ENCODE measurements at regions of chr22 and their contacts with region 1.

Region 1: GRCh38 chr22:41381329-41382097 is at the start of gene TEF:
- DNase-seq: peak; percentile 97
- ATAC-seq: peak; percentile 90
- H3K4me3 ChIP-seq: peak within 1 kb of the TSS; percentile 76 to 84 (median 80)
- H3K27ac ChIP-seq: peak within 1 kb of the TSS; percentile 98
- H3K4me1 ChIP-seq: peaks cover 24% of the 10 kb centered on the region
- H3K27me3 ChIP-seq: no peaks in the 10 kb centered on the region; a peak in 1 of 5 replicates
- CTCF ChIP-seq: no peak
- EP300 ChIP-seq: 0 out of 4 replicates have a peak, but pooled peaks of 1 of the 2 experiments have one; percentile 29
- POLR2A ChIP-seq: no peak
- RAD21 ChIP-seq: no peak
- total RNA-seq, gene TEF: 7.6 and 8.2 TPM in 2 replicates

Region 2: GRCh38 chr22:41285820-41286638 is 95.5 kb before region 1 on chr22 and contains the start of gene RANGAP1:
- CTCF ChIA-PET with region 1: no interaction called
- POLR2A ChIA-PET with region 1: interaction called, 49 read pairs
- in situ Hi-C with region 1: no loop called
- intact Hi-C with region 1: no loop called
- DNase-seq: peak; percentile 97
- ATAC-seq: peak; percentile 96
- H3K4me3 ChIP-seq: peak within 1 kb of the TSS; percentile 97 to 100 (median 98)
- H3K27ac ChIP-seq: peak within 1 kb of the TSS; percentile 88
- H3K4me1 ChIP-seq: peaks cover 58% of the 10 kb centered on the region
- H3K27me3 ChIP-seq: no peaks in the 10 kb centered on the region; a peak in 1 of 5 replicates
- CTCF ChIP-seq: peak; percentile 54
- EP300 ChIP-seq: peak; percentile 4 to 41; a peak in 1 of 4 replicates
- POLR2A ChIP-seq: peak; percentile 74 to 81
- RAD21 ChIP-seq: no peak
- total RNA-seq, gene RANGAP1: 71.7 and 83.9 TPM in 2 replicates

Region 3: GRCh38 chr22:41360126-41360525 is 21.4 kb before region 1 on chr22:
- CTCF ChIA-PET with region 1: no interaction called
- POLR2A ChIA-PET with region 1: interaction called, 135 read pairs
- in situ Hi-C with region 1: no loop called
- intact Hi-C with region 1: no loop called
- DNase-seq: peak; percentile 85
- ATAC-seq: peak; percentile 90
- H3K4me3 ChIP-seq: no peak overlapping the region; a peak in 1 of 6 replicates
- H3K27ac ChIP-seq: no peak overlapping the region
- H3K4me1 ChIP-seq: peaks cover 40% of the 10 kb centered on the region
- H3K27me3 ChIP-seq: no peaks in the 10 kb centered on the region
- CTCF ChIP-seq: 0 out of 2 replicates have a peak, but pooled peaks have one; percentile 10
- EP300 ChIP-seq: peak in 1 of 2 experiments; percentile 48; a peak in 1 of 4 replicates
- POLR2A ChIP-seq: peak in 1 of 2 experiments; percentile 35; a peak in 1 of 4 replicates
- RAD21 ChIP-seq: peak; percentile 70

Region 4: GRCh38 chr22:41403532-41404318 is 22.2 kb after region 1 on chr22:
- CTCF ChIA-PET with region 1: no interaction called
- POLR2A ChIA-PET with region 1: interaction called, 60 read pairs
- in situ Hi-C with region 1: no loop called
- intact Hi-C with region 1: no loop called
- DNase-seq: peak; percentile 76
- ATAC-seq: peak; percentile 92
- H3K4me3 ChIP-seq: peak overlapping the region in 1 of 3 experiments; percentile 56; a peak in 1 of 6 replicates
- H3K27ac ChIP-seq: no peak overlapping the region
- H3K4me1 ChIP-seq: peaks cover 47% of the 10 kb centered on the region
- H3K27me3 ChIP-seq: no peaks in the 10 kb centered on the region
- CTCF ChIP-seq: peak; percentile 100
- EP300 ChIP-seq: no peak
- POLR2A ChIP-seq: no peak
- RAD21 ChIP-seq: peak; percentile 98

Region 5: DNA sequence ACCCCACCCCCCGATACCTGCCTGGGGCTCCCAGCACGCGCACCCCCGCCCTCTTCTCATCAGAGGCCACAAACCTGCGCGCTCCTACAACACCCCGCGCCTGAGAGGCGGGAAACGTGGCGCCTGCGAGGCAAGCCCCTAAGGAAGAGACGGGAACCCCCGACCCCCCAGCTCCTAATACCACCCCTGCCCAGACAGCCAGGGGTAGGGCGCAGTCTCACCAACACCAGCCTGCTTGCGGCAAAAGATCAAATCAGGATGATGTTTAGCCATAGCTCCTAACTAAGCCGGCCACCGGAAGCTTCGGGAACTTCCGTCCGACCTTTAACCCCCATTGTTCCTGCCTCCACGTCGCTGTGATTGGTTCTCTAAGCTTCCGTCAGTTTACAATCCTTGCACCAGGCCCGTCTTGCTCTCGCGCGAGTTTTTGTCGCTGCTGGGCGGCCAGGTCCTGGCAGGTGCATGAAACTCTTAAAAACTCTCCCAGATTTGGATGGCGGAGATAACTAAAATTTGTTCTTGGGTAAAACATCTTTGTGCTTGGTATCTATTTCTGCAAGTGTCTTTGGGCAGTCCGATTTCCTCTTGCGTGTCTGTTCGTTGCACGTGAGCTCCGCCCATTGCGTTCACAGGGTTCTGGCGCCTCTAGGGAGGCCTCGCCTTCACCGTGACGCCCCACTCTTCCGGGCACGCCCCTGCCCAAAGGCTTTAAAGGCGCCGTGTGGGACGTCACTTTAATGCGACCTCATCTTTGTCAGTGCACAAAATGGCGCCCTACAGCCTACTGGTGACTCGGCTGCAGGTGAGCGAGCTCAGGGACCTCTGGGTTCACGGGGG is 87.1 kb after region 1 on chr22 and contains the starts of genes ACO2 and PHF5A:
- CTCF ChIA-PET with region 1: no interaction called
- POLR2A ChIA-PET with region 1: interaction called, 49 read pairs
- in situ Hi-C with region 1: no loop called
- intact Hi-C with region 1: no loop called
- DNase-seq: peak; percentile 96
- ATAC-seq: peak; percentile 93
- H3K4me3 ChIP-seq: peak within 1 kb of the TSS; percentile 92 to 95 (median 92)
- H3K27ac ChIP-seq: peak within 1 kb of the TSS; percentile 98
- H3K4me1 ChIP-seq: peaks cover 66% of the 10 kb centered on the region
- H3K27me3 ChIP-seq: no peaks in the 10 kb centered on the region; a peak in 1 of 5 replicates
- CTCF ChIP-seq: no peak; the same call in 1 of the 2 replicates
- EP300 ChIP-seq: peak in 1 of 2 experiments; percentile 100; a peak in 2 of 4 replicates
- POLR2A ChIP-seq: peak; percentile 75 to 82
- RAD21 ChIP-seq: no peak
- total RNA-seq, gene ACO2: 39.3 and 45.6 TPM in 2 replicates
- total RNA-seq, gene PHF5A: 105 and 154 TPM in 2 replicates